ENCODE measurements at regions of chr6 and their contacts with region 1.

Region 1: GRCh38 chr6:2634139-2634964 is 116.4 kb downstream of the MYLK4 start:
- DNase-seq: peak; percentile 51 to 56
- ATAC-seq: peak; percentile 80 to 82
- H3K4me3 ChIP-seq: peak overlapping the region; percentile 44 to 72 (median 52)
- H3K27ac ChIP-seq: peak overlapping the region; percentile 29 to 71 (median 46)
- H3K4me1 ChIP-seq: peaks cover 20 to 21% of the 10 kb centered on the region in 2 donors
- H3K27me3 ChIP-seq: no peaks in the 10 kb centered on the region
- CTCF ChIP-seq: peak; percentile 80 to 100 (median 96)
- POLR2A ChIP-seq: no peak

Region 2: GRCh38 chr6:1596088-1596852 is 1038.1 kb before region 1 on chr6:
- in situ Hi-C with region 1: loop called in 3 of 4 experiments (anchors 5 to 10 kb)
- intact Hi-C with region 1: loop called (anchors 2 kb)
- DNase-seq: peak in 1 of 2 donors; percentile 44
- ATAC-seq: peak; percentile 80 to 82
- H3K4me3 ChIP-seq: peak overlapping the region in 3 of 4 donors; percentile 8 to 30 (median 9)
- H3K27ac ChIP-seq: no peak overlapping the region
- H3K4me1 ChIP-seq: peaks cover 2 to 3% of the 10 kb centered on the region in 2 donors
- H3K27me3 ChIP-seq: peaks cover 22 to 32% (median 30%) of the 10 kb centered on the region in 3 donors
- CTCF ChIP-seq: peak; percentile 82 to 98 (median 93)
- POLR2A ChIP-seq: no peak

Region 3: GRCh38 chr6:2196079-2196679 is 438.2 kb before region 1 on chr6:
- in situ Hi-C with region 1: loop called in 1 of 4 experiments (anchors 25 kb)
- intact Hi-C with region 1: loop called (anchors 5 kb)
- DNase-seq: no peak
- ATAC-seq: peak; percentile 69 to 72
- H3K4me3 ChIP-seq: no peak overlapping the region
- H3K27ac ChIP-seq: no peak overlapping the region
- H3K4me1 ChIP-seq: peaks cover 0 to 2% of the 10 kb centered on the region in 2 donors
- H3K27me3 ChIP-seq: no peaks in the 10 kb centered on the region
- CTCF ChIP-seq: peak; percentile 65 to 79 (median 70)
- POLR2A ChIP-seq: no peak

Region 4: DNA sequence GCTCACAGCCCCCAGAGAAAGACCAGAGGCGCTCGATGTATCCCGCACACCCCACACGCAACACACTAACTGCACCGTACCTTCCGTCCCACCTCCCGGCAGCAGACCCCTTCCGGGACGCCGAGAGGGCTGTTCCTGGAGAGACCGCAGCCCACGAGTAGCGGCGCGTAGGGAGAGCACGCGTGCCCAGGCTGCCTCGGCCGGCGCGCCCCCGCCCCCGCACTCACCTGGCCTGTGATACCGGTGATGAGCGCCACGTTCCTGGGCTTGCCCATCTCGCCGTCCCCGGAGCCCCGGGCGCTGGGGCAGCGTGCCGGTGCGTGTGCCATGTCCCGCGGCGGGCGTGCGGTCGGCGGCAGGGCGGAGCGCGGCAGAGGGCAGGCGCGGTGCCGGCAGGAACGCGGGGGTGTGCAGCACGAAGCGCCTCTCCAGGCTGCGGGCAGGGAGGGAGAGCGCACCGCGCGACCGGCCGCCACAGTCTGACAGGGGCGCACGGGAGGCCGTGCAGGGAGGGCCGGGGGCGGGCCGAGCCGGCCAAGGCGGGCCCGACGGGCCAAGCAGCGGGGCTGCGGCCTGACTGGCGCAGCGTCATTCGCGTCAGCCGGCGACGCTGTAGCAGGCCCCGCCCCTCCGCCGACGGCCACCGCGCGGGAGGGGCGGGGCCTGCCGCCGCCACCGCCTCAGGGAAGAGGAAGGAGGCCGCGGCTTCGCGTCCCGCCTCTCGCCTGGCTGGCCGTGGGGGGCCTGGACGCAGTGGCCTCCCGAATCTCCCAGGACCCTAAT is 389.1 kb before region 1 on chr6 and contains the start of gene GMDS:
- in situ Hi-C with region 1: no loop called
- intact Hi-C with region 1: loop called (anchors 1 kb)
- DNase-seq: peak; percentile 64 to 78
- ATAC-seq: peak; percentile 90
- H3K4me3 ChIP-seq: peak within 1 kb of the TSS; percentile 70 to 96 (median 71)
- H3K27ac ChIP-seq: peak within 1 kb of the TSS; percentile 88 to 96 (median 90)
- H3K4me1 ChIP-seq: peaks cover 5 to 13% of the 10 kb centered on the region in 2 donors
- H3K27me3 ChIP-seq: no peaks in the 10 kb centered on the region
- CTCF ChIP-seq: peak in 1 of 5 experiments; percentile 17
- POLR2A ChIP-seq: peak; percentile 91 to 96
- total RNA-seq, gene GMDS: 3.4 to 7.2 (median 4.6) TPM

Region 5: DNA sequence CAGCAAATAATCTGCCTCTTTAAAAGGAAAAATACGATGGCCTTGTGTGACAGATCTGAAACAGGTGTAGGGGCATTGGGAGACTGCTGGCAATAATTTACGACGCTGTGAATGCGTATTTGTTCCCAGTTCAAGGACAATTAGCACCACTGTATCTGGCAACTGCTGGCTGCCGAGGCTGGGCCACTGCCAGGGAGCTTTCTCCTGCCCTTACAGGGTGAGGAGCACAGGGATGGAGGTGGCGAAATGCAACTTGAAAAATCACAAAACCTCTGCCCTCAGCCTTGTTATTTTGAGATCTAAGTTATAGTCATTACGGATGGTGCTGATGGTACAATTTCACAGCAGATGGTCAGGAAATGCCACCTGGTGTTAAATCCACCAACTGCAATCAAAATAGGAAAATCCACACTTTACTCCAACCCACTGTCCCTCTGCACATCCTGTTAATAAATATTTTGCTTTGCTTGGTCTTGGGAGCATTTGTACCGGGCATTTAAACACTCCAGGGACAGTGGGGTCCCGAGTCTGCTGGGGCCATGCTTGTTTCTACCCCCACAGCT is 109.9 kb after region 1 on chr6:
- in situ Hi-C with region 1: no loop called
- intact Hi-C with region 1: loop called (anchors 5 kb)
- DNase-seq: peak; percentile 73 to 83
- ATAC-seq: peak; percentile 61 to 64
- H3K4me3 ChIP-seq: peak overlapping the region; percentile 3 to 56 (median 18)
- H3K27ac ChIP-seq: peak overlapping the region; percentile 38 to 76 (median 68)
- H3K4me1 ChIP-seq: peaks cover 29 to 33% of the 10 kb centered on the region in 2 donors
- H3K27me3 ChIP-seq: no peaks in the 10 kb centered on the region
- CTCF ChIP-seq: peak; percentile 15 to 41 (median 29)
- POLR2A ChIP-seq: no peak